ENCODE measurements at regions of chr19 and their contacts with region 1.

Region 1: DNA sequence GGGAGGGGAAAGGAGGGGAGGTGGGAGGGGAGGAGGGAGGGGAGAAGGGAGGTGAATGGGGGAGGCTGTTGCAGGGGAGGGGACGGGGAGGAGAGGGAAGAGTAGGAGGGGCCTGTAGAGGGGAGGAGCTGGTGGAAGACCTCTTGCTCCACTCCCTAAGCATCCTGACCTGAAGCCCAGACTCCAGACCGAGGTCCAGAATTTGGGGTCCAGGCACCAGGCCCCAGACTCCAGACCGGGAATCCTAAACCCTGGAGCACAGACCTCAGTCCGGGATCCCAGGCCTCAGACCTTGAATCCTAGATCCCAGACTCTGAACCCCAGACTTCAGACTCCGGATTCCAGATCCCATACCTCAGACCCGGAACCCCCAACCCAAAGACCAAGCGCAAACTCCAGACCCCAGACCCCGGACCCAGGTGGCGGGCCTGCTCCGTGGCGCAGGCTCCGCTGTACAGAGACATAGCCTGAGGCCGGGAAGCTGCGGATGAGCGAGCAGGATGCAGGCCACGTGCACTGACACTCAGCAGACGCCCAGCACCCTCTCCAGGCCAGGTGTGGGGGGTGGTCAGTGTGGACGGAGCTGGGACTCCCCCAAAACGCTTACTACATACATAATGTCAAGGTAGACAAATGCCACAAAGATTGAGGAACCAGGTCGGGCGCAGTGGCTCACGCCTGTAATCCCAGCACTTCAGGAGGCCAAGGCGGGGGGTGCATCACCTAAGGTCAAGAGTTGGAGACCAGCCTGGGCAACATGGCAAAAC is 710 bp upstream of the BTBD2 start:
- DNase-seq: peak; percentile 87
- H3K27ac ChIP-seq: peak overlapping the region; percentile 79
- CTCF ChIP-seq: no peak

Region 2: GRCh38 chr19:2032296-2032941 is 16.2 kb after region 1 on chr19:
- CTCF ChIA-PET with region 1: interaction called, 12 read pairs
- POLR2A ChIA-PET with region 1: interaction called, 5 read pairs
- DNase-seq: peak; percentile 81
- H3K27ac ChIP-seq: peak overlapping the region; percentile 99
- CTCF ChIP-seq: no peak

Region 3: DNA sequence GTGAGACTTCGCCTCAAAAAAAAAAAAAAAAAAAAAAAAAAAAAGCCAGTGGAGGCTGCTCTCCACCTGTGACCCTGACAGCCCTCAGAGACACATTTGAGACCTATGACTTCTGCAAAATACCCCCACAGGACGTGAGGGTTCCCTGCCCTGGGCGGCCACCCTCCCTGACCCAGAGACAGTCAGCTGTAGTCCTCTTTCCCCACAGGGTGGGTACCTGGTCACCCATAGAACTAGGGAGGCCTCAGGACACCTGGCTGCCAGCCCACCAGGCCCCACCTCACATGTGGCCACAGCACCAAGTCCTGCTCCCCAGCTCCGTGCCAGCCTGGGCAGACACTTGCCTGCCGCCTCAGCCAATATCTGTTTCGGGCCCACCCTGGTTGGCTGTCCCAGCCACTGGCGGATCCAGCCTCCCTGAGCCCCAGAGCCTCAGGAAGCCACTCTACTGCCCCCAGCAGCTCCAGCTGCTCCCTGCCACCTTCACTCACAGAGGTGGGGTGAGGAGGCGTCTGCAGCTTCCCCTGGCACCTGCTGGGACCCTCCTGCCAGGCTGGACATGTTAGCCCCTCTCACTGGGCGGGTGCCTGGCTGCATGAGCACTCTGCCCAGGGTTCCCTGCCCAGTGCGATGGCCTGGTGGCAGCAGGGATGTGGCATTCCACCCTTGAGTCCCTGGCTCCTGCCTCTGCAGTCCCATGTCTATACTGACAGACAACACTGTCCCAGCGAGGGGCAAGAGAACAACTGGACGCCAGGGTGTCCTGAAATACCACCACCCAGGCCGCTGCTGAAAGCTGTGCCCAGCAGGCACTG is 27.9 kb after region 1 on chr19:
- CTCF ChIA-PET with region 1: interaction called, 10 read pairs
- POLR2A ChIA-PET with region 1: no interaction called
- DNase-seq: no peak
- H3K27ac ChIP-seq: peak overlapping the region; percentile 100
- CTCF ChIP-seq: no peak

Region 4: GRCh38 chr19:2070436-2070827 is 54.2 kb after region 1 on chr19:
- CTCF ChIA-PET with region 1: interaction called, 11 read pairs
- POLR2A ChIA-PET with region 1: no interaction called
- DNase-seq: no peak
- H3K27ac ChIP-seq: peak overlapping the region; percentile 66
- CTCF ChIP-seq: no peak